BJ (cell line): ENCODE measurements at regions of chr15 and their contacts with region 1.

Region 1: DNA sequence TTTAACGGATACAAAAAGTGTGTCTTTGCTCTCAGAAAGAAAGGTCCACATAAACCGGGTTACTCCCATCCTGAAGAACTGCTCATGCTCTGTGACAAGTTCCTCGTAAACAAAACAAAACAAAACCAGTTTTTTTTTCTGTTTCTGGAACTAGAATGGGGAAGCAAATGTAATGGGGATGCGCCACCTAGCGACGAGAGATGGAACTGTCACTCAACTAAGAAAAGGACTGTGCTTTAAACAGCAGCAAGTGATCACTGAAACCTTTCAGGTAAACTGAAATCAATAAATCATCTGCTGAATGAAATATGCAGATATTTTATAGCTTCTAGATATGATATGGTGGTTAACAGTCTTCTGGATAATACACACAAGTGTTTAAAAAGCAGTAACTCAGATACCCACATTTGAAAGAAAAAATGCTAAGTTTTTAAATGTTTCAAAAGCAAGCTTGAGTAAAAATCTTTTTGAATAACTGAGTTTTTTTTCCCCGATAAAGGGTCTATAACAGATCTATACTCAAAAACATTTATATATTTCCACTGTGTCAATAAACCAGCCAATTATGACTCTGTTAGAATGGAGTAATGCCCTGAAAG is 10.9 kb downstream of the TM2D3 start:
- DNase-seq: no peak
- H3K4me3 ChIP-seq: no peak overlapping the region
- H3K27me3 ChIP-seq: no peaks in the 10 kb centered on the region
- CTCF ChIP-seq: peak; percentile 88

Region 2: GRCh38 chr15:101288908-101289513 is 352.3 kb before region 1 on chr15:
- CTCF ChIA-PET with region 1: interaction called, 36 read pairs
- POLR2A ChIA-PET with region 1: no interaction called
- DNase-seq: no peak
- H3K4me3 ChIP-seq: no peak overlapping the region
- H3K27me3 ChIP-seq: no peaks in the 10 kb centered on the region
- CTCF ChIP-seq: peak; percentile 66

Region 3: DNA sequence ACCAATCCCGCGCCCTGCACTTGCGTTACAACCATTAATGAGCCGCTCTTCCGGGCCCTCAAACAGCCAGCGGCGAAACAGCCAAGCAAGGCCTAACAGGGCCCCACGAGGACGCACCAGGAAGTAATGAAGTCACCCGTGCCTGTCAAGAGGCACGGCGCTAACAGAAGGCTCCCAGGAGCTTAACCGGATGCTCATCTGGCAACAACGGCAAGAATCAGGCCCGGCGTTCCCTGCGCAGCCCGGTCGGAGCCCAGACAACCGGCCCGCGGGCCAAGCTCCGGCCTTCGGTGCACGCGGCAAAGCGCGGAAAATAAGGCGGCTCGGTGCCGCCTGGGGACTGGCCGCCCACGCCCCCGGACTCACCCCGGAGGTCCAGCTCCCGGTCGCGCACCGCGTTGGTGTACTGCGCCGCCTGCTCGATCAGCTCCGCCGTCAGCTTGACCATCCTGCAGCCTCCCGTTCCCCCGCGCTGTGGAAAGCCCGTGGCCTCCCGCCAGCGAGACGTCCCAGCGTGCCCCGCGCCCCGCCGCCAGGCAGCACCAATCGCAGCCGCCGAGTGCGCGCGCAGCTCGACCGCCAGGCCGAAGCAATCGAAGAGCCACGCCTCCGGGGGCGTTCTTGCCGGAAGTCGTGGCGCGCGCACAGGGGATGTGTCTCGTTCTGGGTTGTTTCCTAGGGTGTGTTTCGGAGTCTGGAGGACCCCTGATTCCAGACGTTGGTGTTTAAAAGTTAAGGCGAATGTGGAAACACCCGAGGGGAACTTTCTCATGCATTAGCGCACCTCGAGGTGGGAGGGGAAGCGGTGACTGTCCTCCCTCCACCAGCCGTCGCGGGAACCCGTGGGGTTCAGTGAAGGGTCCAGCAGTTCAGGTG is 346.3 kb before region 1 on chr15 and contains the start of gene SNRPA1:
- CTCF ChIA-PET with region 1: interaction called, 65 read pairs
- POLR2A ChIA-PET with region 1: no interaction called
- DNase-seq: peak; percentile 52
- H3K4me3 ChIP-seq: peak within 1 kb of the TSS; percentile 95
- H3K27me3 ChIP-seq: no peaks in the 10 kb centered on the region
- CTCF ChIP-seq: no peak
- polyA plus RNA-seq, gene SNRPA1: 27.0 and 44.8 TPM in 2 replicates

Region 4: DNA sequence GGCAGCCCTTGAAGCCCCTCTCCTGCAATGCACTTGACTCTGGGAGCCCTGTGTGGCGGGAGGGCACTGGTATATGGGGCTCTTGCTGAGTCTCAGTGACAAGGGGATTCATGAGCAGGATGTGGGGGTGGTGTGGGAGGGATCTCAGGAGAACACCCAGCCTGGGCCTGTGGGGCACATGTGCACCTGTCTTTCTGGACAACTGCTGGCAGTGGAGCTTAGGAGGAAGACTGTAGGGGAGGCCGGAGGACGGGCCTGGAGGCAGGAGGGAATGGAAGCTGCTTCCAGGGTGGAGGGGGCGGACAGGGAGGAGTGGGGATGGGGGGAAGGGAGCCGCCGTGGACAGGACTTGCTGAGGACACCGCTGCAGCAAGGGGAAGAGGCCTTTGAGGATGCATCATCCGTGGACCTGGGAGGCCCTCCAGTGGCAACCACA is 335.4 kb before region 1 on chr15:
- CTCF ChIA-PET with region 1: interaction called, 65 read pairs
- POLR2A ChIA-PET with region 1: no interaction called
- DNase-seq: no peak
- H3K4me3 ChIP-seq: no peak overlapping the region
- H3K27me3 ChIP-seq: no peaks in the 10 kb centered on the region
- CTCF ChIP-seq: no peak

Region 5: DNA sequence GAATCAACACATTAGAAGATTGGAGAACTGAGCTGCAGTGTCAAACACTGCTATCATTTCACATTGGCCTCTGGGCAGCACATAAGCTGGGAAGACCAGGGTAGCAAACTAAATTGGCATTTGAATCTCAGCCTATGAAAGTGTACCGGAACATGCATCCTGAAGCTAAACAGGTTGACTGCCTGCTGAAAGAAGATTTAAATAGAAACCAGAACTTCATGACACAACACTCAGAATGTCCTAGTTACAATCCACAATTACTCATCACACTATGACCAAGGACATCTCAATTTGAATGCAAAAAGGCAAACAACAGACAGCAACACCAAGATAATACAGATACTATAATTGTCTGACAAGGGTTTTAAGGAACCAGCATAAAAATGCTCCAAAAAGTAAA is 15.3 kb before region 1 on chr15:
- CTCF ChIA-PET with region 1: interaction called, 27 read pairs
- POLR2A ChIA-PET with region 1: no interaction called
- DNase-seq: no peak
- H3K4me3 ChIP-seq: no peak overlapping the region
- H3K27me3 ChIP-seq: no peaks in the 10 kb centered on the region
- CTCF ChIP-seq: no peak

Region 6: DNA sequence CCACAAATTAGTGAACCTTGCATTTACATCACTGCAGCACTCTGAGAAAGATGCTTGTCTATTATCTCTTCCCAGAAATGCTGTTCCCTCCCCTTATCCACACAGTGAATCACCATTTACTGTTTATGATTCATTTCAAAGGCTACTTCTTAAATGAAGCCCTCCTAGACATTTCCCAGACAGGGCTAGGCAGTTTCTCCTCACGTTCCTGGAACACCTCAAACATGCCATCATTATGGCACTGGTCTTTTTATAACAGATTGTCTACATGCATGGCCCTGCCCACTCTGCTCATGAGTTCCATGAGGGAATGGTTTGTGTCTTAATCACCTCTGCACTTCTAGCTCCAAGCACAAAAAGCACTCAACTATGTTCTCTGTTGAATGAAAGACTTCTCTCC is 43.1 kb after region 1 on chr15:
- CTCF ChIA-PET with region 1: no interaction called
- POLR2A ChIA-PET with region 1: no interaction called
- DNase-seq: peak; percentile 85
- H3K4me3 ChIP-seq: no peak overlapping the region
- H3K27me3 ChIP-seq: no peaks in the 10 kb centered on the region
- CTCF ChIP-seq: no peak

Region 7: GRCh38 chr15:101827257-101827656 is 186.0 kb after region 1 on chr15:
- CTCF ChIA-PET with region 1: no interaction called
- POLR2A ChIA-PET with region 1: no interaction called
- DNase-seq: peak; percentile 75
- H3K4me3 ChIP-seq: no peak overlapping the region
- H3K27me3 ChIP-seq: no peaks in the 10 kb centered on the region
- CTCF ChIP-seq: no peak